ENCODE measurements at regions of chr7 and their contacts with region 1.

Region 1: DNA sequence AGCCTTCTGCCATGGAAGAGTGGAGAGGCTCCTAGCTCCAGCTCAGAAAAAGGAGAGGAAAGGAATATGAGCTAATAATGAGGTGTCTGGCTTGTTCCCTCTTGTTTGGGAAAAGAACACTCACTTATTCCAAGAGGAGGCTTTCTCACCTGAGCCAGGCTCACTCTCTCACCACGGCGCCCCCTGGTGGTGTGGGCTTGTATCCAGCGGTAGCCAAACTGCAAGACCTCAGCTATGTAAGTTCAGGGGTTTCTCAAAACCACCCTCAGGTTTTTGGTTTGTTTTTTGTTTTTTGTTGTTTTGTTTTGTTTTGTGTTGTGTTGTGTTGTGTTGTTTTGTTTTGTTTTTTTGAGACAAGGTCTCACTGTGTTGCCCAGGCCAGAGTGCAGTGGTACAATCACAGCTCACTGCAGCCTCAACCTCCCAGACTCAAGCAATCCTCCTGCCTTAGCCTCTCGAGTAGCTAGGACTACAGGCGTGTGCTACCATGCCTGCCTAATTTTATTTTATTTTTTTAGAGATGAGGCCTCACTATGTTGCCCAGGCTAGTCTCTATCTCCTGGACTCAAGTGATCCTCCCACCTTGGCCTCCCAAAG is 124.0 kb downstream of the TMEM130 start:
- DNase-seq: peak; percentile 68 to 71
- ATAC-seq: peak; percentile 74 to 92; a peak in 5 of 6 replicates
- H3K4me3 ChIP-seq: no peak overlapping the region
- H3K27ac ChIP-seq: no peak overlapping the region
- H3K4me1 ChIP-seq: no peaks in the 10 kb centered on the region
- CTCF ChIP-seq: peak; percentile 82
- EP300 ChIP-seq: no peak
- POLR2A ChIP-seq: no peak
- RAD21 ChIP-seq: peak; percentile 68 to 72

Region 2: DNA sequence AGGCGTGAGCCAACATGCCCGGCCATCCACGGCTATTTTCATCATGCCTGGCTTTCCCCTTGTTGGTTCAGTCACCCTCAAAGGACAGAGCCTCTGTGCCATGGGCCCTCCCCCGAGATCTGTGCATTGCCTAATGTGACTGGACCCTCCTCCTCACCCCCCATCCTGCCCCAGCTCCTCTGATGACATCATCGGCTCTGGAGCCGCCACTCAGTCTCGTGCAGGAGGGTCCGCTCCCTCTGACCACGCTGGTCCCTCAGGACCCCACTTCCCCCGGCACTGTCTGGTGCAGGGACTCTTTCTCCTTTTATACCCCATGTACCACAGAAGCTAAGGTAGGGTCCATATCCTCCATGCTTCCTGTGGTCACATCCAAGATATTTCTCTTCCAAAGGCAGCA is 311.7 kb before region 1 on chr7:
- CTCF ChIA-PET with region 1: interaction called, 33 read pairs
- POLR2A ChIA-PET with region 1: no interaction called
- DNase-seq: no peak
- ATAC-seq: no peak; a peak in 2 of 6 replicates
- H3K4me3 ChIP-seq: no peak overlapping the region
- H3K27ac ChIP-seq: no peak overlapping the region
- H3K4me1 ChIP-seq: no peaks in the 10 kb centered on the region
- CTCF ChIP-seq: no peak
- EP300 ChIP-seq: no peak
- POLR2A ChIP-seq: no peak
- RAD21 ChIP-seq: no peak

Region 3: DNA sequence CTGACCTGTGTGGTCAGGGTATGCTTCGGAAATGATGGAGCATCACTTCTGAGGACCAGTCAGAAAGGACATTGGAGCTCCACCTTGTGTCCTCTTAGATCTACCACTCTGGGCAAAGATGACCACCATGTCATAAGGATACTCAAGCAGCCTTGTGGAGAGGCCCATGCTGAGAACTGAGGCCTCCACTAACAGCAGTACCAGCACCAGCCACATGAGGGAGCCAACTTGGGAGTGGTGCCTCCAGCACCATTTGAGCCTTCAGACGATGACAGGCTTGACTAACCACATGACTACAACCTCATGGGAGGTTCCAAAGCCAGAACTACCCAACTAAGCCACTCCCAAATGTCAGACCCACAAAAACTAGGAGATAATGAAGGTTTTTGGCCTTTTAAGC is 12.8 kb before region 1 on chr7:
- CTCF ChIA-PET with region 1: interaction called, 21 read pairs
- POLR2A ChIA-PET with region 1: no interaction called
- DNase-seq: peak; percentile 71 to 81
- ATAC-seq: peak; percentile 57 to 90; a peak in 5 of 6 replicates
- H3K4me3 ChIP-seq: no peak overlapping the region
- H3K27ac ChIP-seq: no peak overlapping the region
- H3K4me1 ChIP-seq: peaks cover 4% of the 10 kb centered on the region; the same call in 1 of the 3 replicates
- CTCF ChIP-seq: peak; percentile 33
- EP300 ChIP-seq: no peak
- POLR2A ChIP-seq: no peak
- RAD21 ChIP-seq: peak; percentile 14 to 43; a peak in 2 of 5 replicates

Region 4: GRCh38 chr7:98810153-98810802 is 64.5 kb after region 1 on chr7:
- CTCF ChIA-PET with region 1: interaction called, 13 read pairs
- POLR2A ChIA-PET with region 1: no interaction called
- DNase-seq: no peak
- ATAC-seq: no peak
- H3K4me3 ChIP-seq: no peak overlapping the region
- H3K27ac ChIP-seq: no peak overlapping the region
- H3K4me1 ChIP-seq: no peaks in the 10 kb centered on the region
- CTCF ChIP-seq: no peak
- EP300 ChIP-seq: no peak
- POLR2A ChIP-seq: no peak
- RAD21 ChIP-seq: no peak

Region 5: DNA sequence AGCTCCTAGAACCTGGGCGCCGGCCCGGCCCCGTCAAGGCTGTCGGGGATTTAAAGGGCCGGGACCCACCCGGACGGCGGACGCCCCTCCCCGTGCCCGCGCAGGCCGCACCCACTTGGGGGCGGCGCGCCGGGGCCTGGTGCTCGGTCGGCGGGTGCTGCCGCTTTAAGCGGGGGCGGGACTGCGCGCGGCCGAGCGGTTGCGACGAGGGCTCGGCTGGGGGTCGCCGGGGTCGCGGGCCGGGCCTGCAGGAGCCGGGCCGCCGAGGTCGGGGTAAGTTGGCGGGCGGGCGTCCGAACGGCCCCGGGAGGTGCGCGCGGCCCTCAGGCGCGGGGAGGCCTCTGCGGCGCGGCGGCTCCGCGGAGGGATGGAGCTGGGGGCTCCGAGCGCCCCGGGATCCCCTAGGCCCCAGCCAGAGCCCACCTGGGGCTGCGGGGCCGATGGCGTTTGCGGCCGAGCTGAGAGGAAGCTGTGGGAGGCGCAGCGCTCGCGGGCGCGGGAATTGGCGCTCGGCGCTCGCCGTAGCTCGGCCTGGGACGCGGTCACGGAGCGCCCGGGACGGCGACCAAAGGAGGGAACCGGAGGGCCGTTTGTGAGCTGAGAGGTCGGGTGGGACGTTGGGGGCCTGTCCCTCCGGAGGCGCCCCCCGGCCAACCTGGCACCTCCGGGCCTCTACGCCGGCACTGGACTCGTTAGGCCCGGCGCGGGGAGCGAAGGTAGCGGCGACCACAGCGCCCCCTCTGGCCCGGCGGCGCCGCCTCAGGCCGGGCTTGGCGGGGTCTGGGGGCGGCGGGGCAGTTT is 132.7 kb after region 1 on chr7 and contains the start of gene TRRAP:
- CTCF ChIA-PET with region 1: no interaction called
- POLR2A ChIA-PET with region 1: no interaction called
- DNase-seq: peak; percentile 58 to 79
- ATAC-seq: peak; percentile 85 to 92
- H3K4me3 ChIP-seq: peak within 1 kb of the TSS; percentile 82
- H3K27ac ChIP-seq: peak within 1 kb of the TSS; percentile 91 to 100
- H3K4me1 ChIP-seq: peaks cover 9% of the 10 kb centered on the region; the same call in 2 of the 3 replicates
- CTCF ChIP-seq: peak; percentile 89
- EP300 ChIP-seq: no peak
- POLR2A ChIP-seq: peak; percentile 34
- RAD21 ChIP-seq: no peak
- polyA plus RNA-seq, gene TRRAP: 22.1 and 28.5 TPM in 2 replicates

Measured in A549 (cell line).